Cardiac septum (tissue), 1 donor: ENCODE measurements at regions of chr14 and their contacts with region 1.

Region 1: GRCh38 chr14:55277972-55278740 is 6.9 kb downstream of the FBXO34 start:
- DNase-seq: no peak

Region 2: DNA sequence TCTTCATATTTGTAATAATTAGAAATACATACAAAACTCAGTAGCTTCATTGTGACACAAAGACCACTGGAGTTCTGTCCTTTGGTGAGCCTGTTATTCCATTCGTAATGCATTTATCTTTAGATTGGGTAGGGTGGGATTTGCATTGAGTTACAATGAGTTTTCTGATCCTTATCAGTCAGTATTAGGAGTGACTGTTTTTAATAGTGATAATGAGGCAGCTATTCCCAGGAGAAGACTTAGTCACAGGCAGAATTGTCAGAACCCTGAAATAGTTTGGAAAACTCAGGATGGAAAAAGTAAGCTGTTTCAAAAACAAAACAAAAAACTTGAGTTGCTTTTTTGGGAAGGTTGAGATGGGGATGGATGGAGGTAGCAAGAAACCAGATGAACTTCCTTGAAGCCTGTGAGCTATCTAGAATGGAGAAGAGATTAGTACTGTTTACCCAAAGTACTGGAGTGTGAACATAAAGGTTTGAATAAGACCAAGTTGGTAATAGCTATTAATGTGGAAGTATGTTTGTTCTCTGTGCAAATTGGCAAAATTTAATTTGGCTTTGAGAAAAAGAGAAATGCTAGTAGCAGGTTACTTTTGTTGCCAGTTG is 31.7 kb after region 1 on chr14:
- intact Hi-C with region 1: loop called (anchors 5 kb)
- DNase-seq: no peak

Region 3: DNA sequence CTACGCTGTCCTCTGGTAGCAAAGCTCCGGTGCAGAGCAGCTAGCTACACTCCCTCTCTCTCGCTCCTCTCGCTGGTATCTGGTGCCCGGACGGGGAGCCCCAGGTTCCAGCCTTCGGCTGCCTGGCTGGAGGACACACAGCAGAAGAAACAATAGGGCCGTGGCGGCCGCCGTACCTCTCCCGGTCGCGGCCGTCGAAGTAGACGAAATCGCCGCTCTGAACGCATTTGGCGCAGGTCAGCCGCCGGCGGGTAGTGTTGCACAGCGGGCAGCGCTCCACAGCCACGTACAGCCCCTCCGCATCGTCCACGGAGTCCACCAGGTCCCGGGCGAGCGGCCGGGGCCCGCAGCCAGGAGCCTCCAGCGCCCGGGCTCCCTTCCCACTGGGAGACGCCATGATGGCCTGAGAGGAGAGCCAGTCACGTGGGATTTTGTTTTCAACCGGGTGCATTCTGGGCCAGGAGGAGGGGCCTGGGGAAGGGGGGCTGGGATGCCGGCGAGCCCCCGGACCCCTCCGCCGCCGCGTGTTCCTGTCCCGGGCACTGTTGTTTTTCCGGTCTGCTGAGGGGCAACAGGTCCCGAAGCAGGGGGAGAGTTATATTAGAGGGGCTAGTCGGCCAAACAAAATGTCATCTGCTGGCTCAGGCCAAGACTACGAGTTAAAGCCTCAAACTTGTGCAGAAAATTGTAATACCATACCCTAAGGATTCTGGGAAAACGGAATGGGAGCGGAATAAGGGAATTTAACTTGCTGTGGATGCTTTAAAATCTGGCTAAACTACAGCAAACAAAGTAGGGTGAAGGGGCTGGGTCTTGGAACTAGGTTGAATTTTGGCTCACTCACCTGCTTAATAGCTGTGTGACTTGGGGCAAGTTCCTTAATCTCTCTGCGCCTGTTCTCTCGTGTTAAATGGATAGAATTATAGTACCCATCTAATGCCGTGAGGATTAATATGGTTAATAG is 133.6 kb after region 1 on chr14 and contains the start of gene ATG14:
- intact Hi-C with region 1: loop called (anchors 5 kb)
- DNase-seq: peak; percentile 92
- total RNA-seq, gene ATG14: 12.5 TPM